ENCODE measurements at regions of chr12 and their contacts with region 1.

Region 1: GRCh38 chr12:27014085-27014858 is at the start of gene TM7SF3:
- DNase-seq: peak; percentile 95
- H3K4me3 ChIP-seq: peak within 1 kb of the TSS; percentile 69 to 95 (median 84)
- H3K27ac ChIP-seq: peak within 1 kb of the TSS; percentile 81 to 95 (median 92)
- H3K4me1 ChIP-seq: peaks cover 0 to 40% (median 30%) of the 10 kb centered on the region in 4 donors
- H3K27me3 ChIP-seq: no peaks in the 10 kb centered on the region
- CTCF ChIP-seq: peak; percentile 75 to 91 (median 80)
- EP300 ChIP-seq: no peak
- POLR2A ChIP-seq: no peak
- total RNA-seq, gene TM7SF3: 38.4 to 56.9 (median 51.2) TPM

Region 2: GRCh38 chr12:27243804-27244683 is 229.8 kb after region 1 on chr12 and contains the start of gene STK38L:
- intact Hi-C with region 1: loop called (anchors 2 kb)
- DNase-seq: peak; percentile 98
- H3K4me3 ChIP-seq: peak within 1 kb of the TSS; percentile 64 to 95 (median 80)
- H3K27ac ChIP-seq: peak within 1 kb of the TSS; percentile 88 to 95 (median 94)
- H3K4me1 ChIP-seq: peaks cover 0 to 33% (median 21%) of the 10 kb centered on the region in 4 donors
- H3K27me3 ChIP-seq: no peaks in the 10 kb centered on the region
- CTCF ChIP-seq: peak in 2 of 4 experiments; percentile 33 to 43
- EP300 ChIP-seq: peak in 1 of 4 donors; percentile 4
- POLR2A ChIP-seq: peak; percentile 80 to 85
- total RNA-seq, gene STK38L: 67.3 to 86.2 (median 78.3) TPM

Region 3: GRCh38 chr12:27305673-27306456 is 291.6 kb after region 1 on chr12:
- intact Hi-C with region 1: loop called (anchors 5 kb)
- DNase-seq: no peak
- H3K4me3 ChIP-seq: no peak overlapping the region
- H3K27ac ChIP-seq: peak overlapping the region; percentile 53 to 73 (median 66)
- H3K4me1 ChIP-seq: peaks cover 0 to 27% (median 23%) of the 10 kb centered on the region in 4 donors
- H3K27me3 ChIP-seq: no peaks in the 10 kb centered on the region
- CTCF ChIP-seq: peak; percentile 13 to 55 (median 25)
- EP300 ChIP-seq: no peak
- POLR2A ChIP-seq: no peak

Measured in sigmoid colon (tissue), 7 donors.